ENCODE measurements at regions of chr5 and their contacts with region 1.

Region 1: DNA sequence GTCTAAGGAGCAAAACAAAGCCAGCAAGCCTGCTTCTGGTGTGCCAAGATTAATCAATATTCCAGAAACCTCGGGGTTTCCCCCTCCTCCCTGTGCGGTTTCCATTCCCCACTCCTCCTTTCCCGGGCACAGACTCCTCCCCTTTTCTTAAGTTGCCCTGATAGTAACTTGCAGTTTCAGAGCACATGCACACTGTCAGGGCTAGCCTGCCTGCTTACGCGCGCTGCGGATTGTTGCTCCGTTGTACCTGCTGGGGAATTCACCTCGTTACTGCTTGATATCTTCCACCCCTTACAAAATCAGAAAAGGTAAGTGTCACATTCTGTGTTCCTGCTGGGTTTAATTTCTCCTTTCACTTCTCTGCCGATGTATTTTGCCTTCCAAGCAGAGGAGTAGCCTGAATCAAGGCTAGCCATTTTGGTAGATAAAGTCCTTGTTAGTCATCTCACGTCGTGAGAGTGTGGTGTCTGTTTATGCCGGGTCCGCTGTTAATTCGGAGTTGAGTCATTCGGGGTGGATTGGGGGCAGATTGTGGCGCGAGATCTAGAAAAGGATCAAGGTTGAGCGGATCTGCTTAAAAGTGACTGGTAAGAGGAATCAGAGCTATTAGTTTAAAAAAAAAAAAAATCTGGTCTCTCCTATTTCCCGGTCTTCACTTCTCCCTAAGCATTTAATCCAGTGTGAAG is at the start of gene SLC1A3:
- DNase-seq: peak; percentile 56 to 75 (median 61)
- H3K4me3 ChIP-seq: peak within 1 kb of the TSS; percentile 68 to 99 (median 85)
- H3K4me3 Mint-ChIP-seq: peak within 1 kb of the TSS; percentile 94 to 97
- H3K27ac ChIP-seq: peak within 1 kb of the TSS; percentile 47 to 88
- H3K27ac Mint-ChIP-seq: peak within 1 kb of the TSS; percentile 83 to 94 (median 87)
- H3K4me1 ChIP-seq: peaks cover 22 to 34% of the 10 kb centered on the region in 2 donors
- H3K4me1 Mint-ChIP-seq: peaks cover 48% of the 10 kb centered on the region
- H3K27me3 ChIP-seq: no peaks in the 10 kb centered on the region
- H3K27me3 Mint-ChIP-seq: peaks cover 0 to 2% (median 0%) of the 10 kb centered on the region in 3 donors
- CTCF ChIP-seq: no peak
- polyA plus RNA-seq, gene SLC1A3: 1.2 to 3.3 (median 1.3) TPM

Region 2: DNA sequence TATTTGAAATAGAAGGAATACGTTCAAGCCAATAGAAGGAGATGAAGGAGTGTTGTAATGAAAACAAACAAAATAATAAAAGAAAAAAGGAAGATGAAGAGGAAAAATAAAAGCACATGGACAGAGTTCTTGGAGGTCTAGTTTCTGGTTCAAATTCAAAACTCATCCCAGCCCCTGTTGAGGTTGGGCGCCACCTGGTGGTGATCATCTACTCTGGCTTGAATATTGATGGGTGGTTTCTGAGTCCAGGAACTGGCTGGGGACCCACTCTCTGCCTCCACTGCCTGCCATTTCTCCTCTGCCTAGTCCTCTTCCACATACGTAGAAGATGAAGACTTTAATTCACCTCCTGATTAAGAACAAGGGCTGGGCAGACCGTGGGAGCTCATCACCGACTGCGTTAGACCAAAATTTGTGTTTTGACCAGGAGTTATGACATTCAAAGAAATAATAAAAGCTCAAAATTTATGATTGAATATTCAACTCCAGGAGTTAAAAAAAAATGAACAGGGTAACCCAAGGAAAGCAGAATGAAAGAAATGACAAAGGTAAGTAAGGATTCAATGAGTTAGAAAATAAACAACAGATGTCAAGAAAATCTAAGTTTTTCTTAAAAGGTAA is 99.1 kb before region 1 on chr5:
- intact Hi-C with region 1: no loop called
- DNase-seq: peak; percentile 46 to 64 (median 56)
- H3K4me3 ChIP-seq: no peak overlapping the region
- H3K4me3 Mint-ChIP-seq: no peak overlapping the region
- H3K27ac ChIP-seq: no peak overlapping the region
- H3K27ac Mint-ChIP-seq: no peak overlapping the region
- H3K4me1 ChIP-seq: no peaks in the 10 kb centered on the region
- H3K4me1 Mint-ChIP-seq: peaks cover 2% of the 10 kb centered on the region
- H3K27me3 ChIP-seq: no peaks in the 10 kb centered on the region
- H3K27me3 Mint-ChIP-seq: peaks cover 0 to 5% (median 2%) of the 10 kb centered on the region in 3 donors
- CTCF ChIP-seq: peak; percentile 87

Region 3: GRCh38 chr5:36657563-36657995 is 51.0 kb after region 1 on chr5:
- intact Hi-C with region 1: loop called in 1 of 2 experiments (anchors 10 kb)
- DNase-seq: peak; percentile 97 to 100 (median 99)
- H3K4me3 ChIP-seq: peak overlapping the region in 2 of 3 experiments; percentile 34 to 59
- H3K4me3 Mint-ChIP-seq: peak overlapping the region; percentile 2 to 69
- H3K27ac ChIP-seq: peak overlapping the region; percentile 62 to 89
- H3K27ac Mint-ChIP-seq: peak overlapping the region; percentile 85 to 96 (median 91)
- H3K4me1 ChIP-seq: peaks cover 41 to 48% of the 10 kb centered on the region in 2 donors
- H3K4me1 Mint-ChIP-seq: peaks cover 62% of the 10 kb centered on the region
- H3K27me3 ChIP-seq: no peaks in the 10 kb centered on the region
- H3K27me3 Mint-ChIP-seq: no peaks in the 10 kb centered on the region
- CTCF ChIP-seq: no peak

Region 4: DNA sequence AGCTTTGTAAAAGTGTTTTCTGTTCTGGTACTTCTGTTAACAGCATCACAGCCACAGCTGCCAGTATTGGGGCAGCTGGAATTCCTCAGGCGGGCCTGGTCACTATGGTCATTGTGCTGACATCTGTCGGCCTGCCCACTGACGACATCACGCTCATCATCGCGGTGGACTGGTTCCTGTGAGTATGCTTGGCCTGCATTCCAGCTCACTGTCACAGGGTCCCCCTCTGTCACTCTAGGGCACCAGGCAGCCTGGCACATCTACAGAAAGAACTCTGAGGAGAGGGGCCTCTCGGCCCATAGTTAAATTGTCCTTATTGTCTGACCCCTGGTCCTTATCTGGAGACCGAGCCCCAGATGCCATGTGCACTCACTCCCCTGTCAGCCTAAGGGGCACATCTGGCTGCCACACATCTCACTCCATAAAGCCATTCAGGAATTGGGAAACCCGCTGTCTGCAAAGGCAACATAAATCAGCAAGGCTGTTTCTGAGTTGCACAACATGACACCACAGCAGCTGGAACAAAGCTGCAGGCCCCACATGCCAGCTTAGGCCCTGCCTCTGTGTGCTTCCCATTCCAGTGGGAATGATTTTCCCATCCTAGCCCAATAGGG is 77.4 kb after region 1 on chr5:
- intact Hi-C with region 1: loop called in 1 of 2 experiments (anchors 5 kb)
- DNase-seq: peak; percentile 54 to 77 (median 57)
- H3K4me3 ChIP-seq: no peak overlapping the region
- H3K4me3 Mint-ChIP-seq: no peak overlapping the region
- H3K27ac ChIP-seq: peak overlapping the region; percentile 68 to 96
- H3K27ac Mint-ChIP-seq: peak overlapping the region; percentile 86 to 98 (median 92)
- H3K4me1 ChIP-seq: peaks cover 71 to 79% of the 10 kb centered on the region in 2 donors
- H3K4me1 Mint-ChIP-seq: peaks cover 71% of the 10 kb centered on the region
- H3K27me3 ChIP-seq: no peaks in the 10 kb centered on the region
- H3K27me3 Mint-ChIP-seq: peaks cover 0 to 2% (median 0%) of the 10 kb centered on the region in 3 donors
- CTCF ChIP-seq: no peak

Region 5: GRCh38 chr5:36897616-36898015 is 291.0 kb after region 1 on chr5:
- intact Hi-C with region 1: no loop called
- DNase-seq: no peak
- H3K4me3 ChIP-seq: no peak overlapping the region
- H3K4me3 Mint-ChIP-seq: no peak overlapping the region
- H3K27ac ChIP-seq: no peak overlapping the region
- H3K27ac Mint-ChIP-seq: no peak overlapping the region
- H3K4me1 ChIP-seq: peaks cover 18 to 36% of the 10 kb centered on the region in 2 donors
- H3K4me1 Mint-ChIP-seq: peaks cover 66% of the 10 kb centered on the region
- H3K27me3 ChIP-seq: no peaks in the 10 kb centered on the region
- H3K27me3 Mint-ChIP-seq: no peaks in the 10 kb centered on the region
- CTCF ChIP-seq: no peak

Region 6: GRCh38 chr5:36908544-36909260 is 302.1 kb after region 1 on chr5:
- intact Hi-C with region 1: no loop called
- DNase-seq: no peak
- H3K4me3 ChIP-seq: no peak overlapping the region
- H3K4me3 Mint-ChIP-seq: no peak overlapping the region
- H3K27ac ChIP-seq: peak overlapping the region in 1 of 2 donors; percentile 43
- H3K27ac Mint-ChIP-seq: peak overlapping the region in 1 of 7 donors; percentile 63
- H3K4me1 ChIP-seq: peaks cover 6 to 11% of the 10 kb centered on the region in 2 donors
- H3K4me1 Mint-ChIP-seq: peaks cover 30% of the 10 kb centered on the region
- H3K27me3 ChIP-seq: no peaks in the 10 kb centered on the region
- H3K27me3 Mint-ChIP-seq: no peaks in the 10 kb centered on the region
- CTCF ChIP-seq: no peak

Region 7: GRCh38 chr5:36982146-36982545 is 375.6 kb after region 1 on chr5:
- intact Hi-C with region 1: no loop called
- DNase-seq: no peak
- H3K4me3 ChIP-seq: no peak overlapping the region
- H3K4me3 Mint-ChIP-seq: no peak overlapping the region
- H3K27ac ChIP-seq: no peak overlapping the region
- H3K27ac Mint-ChIP-seq: no peak overlapping the region
- H3K4me1 ChIP-seq: no peaks in the 10 kb centered on the region
- H3K4me1 Mint-ChIP-seq: peaks cover 2% of the 10 kb centered on the region
- H3K27me3 ChIP-seq: no peaks in the 10 kb centered on the region
- H3K27me3 Mint-ChIP-seq: no peaks in the 10 kb centered on the region
- CTCF ChIP-seq: no peak